ENCODE measurements at regions of chr17 and their contacts with region 1.

Region 1: GRCh38 chr17:34527908-34528470 is 51.4 kb upstream of the TMEM132E start:
- DNase-seq: peak; percentile 61
- ATAC-seq: peak; percentile 94
- H3K4me3 Mint-ChIP-seq: no peak overlapping the region
- H3K27ac Mint-ChIP-seq: no peak overlapping the region
- H3K4me1 Mint-ChIP-seq: peaks cover 16% of the 10 kb centered on the region
- H3K27me3 Mint-ChIP-seq: no peaks in the 10 kb centered on the region; the same call in none of the 2 replicates
- CTCF ChIP-seq: peak; percentile 82

Region 2: GRCh38 chr17:34443619-34444469 is 84.1 kb before region 1 on chr17:
- CTCF ChIA-PET with region 1: interaction called, 23 read pairs
- POLR2A ChIA-PET with region 1: no interaction called
- DNase-seq: peak; percentile 56
- ATAC-seq: peak; percentile 88
- H3K4me3 Mint-ChIP-seq: no peak overlapping the region
- H3K27ac Mint-ChIP-seq: no peak overlapping the region
- H3K4me1 Mint-ChIP-seq: peaks cover 13% of the 10 kb centered on the region
- H3K27me3 Mint-ChIP-seq: no peaks in the 10 kb centered on the region; the same call in 1 of the 2 replicates
- CTCF ChIP-seq: peak; percentile 40; the same call in 1 of the 2 replicates

Region 3: GRCh38 chr17:34485999-34486398 is 42.0 kb before region 1 on chr17:
- CTCF ChIA-PET with region 1: interaction called, 13 read pairs
- POLR2A ChIA-PET with region 1: no interaction called
- DNase-seq: no peak
- ATAC-seq: no peak
- H3K4me3 Mint-ChIP-seq: no peak overlapping the region
- H3K27ac Mint-ChIP-seq: no peak overlapping the region
- H3K4me1 Mint-ChIP-seq: peaks cover 5% of the 10 kb centered on the region; the same call in 1 of the 2 replicates
- H3K27me3 Mint-ChIP-seq: peaks cover 21% of the 10 kb centered on the region
- CTCF ChIP-seq: no peak

Region 4: GRCh38 chr17:34562387-34562786 is 34.4 kb after region 1 on chr17:
- CTCF ChIA-PET with region 1: interaction called, 12 read pairs
- POLR2A ChIA-PET with region 1: no interaction called
- DNase-seq: peak; percentile 48
- ATAC-seq: peak; percentile 94
- H3K4me3 Mint-ChIP-seq: no peak overlapping the region
- H3K27ac Mint-ChIP-seq: no peak overlapping the region
- H3K4me1 Mint-ChIP-seq: no peaks in the 10 kb centered on the region
- H3K27me3 Mint-ChIP-seq: peaks cover 19% of the 10 kb centered on the region
- CTCF ChIP-seq: peak; percentile 53